Dorsolateral prefrontal cortex (tissue), 120 donors: ENCODE measurements at regions of chr3 and their contacts with region 1.

Region 1: GRCh38 chr3:88025001-88025552 is 33.7 kb downstream of the CGGBP1 start:
- DNase-seq: no peak
- H3K4me3 ChIP-seq: no peak overlapping the region
- H3K27ac ChIP-seq: no peak overlapping the region
- H3K27me3 ChIP-seq: no peaks in the 10 kb centered on the region
- CTCF ChIP-seq: no peak

Region 2: DNA sequence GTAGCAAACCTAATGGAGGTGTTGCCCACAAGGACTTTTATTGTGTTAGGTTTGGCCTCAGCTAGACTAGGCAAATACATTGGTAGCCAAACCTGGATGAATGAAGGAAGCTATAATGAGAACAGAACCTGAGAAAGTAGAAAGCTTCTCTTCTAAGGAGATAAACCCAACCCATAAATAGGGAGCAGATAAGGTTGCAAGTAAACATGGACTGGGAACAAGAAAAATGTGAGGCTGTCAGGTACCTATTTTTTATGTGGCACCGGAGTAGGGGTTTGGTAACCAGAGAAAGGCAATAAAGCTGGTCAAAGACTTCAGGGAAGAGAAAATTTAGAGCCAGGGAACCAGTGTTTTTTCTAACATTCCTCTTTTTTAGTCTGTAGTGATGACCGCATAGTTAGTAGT is 59.0 kb after region 1 on chr3:
- intact Hi-C with region 1: no loop called
- DNase-seq: no peak
- H3K4me3 ChIP-seq: no peak overlapping the region
- H3K27ac ChIP-seq: no peak overlapping the region
- H3K27me3 ChIP-seq: no peaks in the 10 kb centered on the region
- CTCF ChIP-seq: no peak

Region 3: DNA sequence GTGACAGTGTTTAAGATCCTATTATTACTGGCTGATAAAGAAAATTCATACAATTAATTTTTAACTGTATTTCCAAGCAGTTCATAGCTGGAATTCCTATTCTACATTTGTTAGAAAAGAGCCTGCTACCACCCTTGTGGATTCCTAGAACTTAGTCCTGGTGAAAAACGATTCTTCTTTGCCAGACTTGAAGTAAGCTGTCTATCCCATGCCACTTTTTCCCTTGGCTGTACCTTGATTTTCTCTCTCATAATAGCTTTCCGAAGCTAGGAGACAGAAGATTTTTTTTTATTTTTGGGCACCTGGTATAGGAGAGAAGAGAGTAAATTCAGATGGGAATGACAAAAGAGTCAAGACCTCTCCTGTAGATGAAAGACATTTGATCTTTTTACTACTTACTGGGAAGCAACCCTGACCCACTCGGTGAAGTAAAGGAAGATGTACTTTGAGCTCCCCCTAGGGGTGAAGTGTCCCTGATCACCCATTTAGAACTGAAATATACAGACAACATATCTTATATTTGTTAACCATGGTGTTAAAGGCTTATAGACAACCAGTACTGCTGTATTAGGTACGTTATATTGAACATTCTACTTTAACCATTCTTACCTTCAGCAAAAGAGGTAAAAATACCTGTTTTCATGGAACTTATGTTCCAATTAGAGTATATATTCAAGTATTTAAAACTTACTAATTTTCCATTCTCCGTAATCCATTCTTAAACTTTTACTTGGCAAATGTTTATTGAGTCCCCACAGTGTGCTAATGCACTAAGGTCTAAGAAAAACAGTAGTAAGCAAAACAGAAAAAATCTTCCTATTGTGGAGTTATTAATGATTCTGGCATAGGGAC is 88.5 kb after region 1 on chr3:
- intact Hi-C with region 1: loop called in 1 of 2 experiments (anchors 10 kb)
- DNase-seq: peak in 4 of 10 donors; percentile 15 to 60 (median 55)
- H3K4me3 ChIP-seq: no peak overlapping the region
- H3K27ac ChIP-seq: no peak overlapping the region
- H3K27me3 ChIP-seq: no peaks in the 10 kb centered on the region
- CTCF ChIP-seq: peak; percentile 59 to 87 (median 78)

Region 4: DNA sequence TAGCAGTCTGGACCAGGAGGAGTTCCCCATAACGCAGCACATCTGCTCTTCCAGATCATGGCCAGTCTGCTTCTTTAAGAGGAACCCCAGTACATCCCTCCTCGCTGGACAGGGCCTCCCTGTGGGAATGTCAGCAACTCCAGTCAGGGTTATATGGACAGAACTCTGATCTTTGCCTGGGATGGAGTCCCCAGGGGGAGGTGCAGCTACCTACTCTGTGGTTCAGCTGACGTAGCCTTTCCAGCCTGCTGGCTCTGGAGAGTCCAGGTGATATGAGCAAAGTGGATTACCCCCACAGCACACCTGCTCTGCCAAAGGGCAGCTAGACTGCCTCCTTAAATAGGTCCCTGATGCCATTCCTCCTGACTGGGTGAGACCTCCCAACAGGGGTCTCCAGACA is 665.2 kb after region 1 on chr3:
- intact Hi-C with region 1: no loop called
- DNase-seq: no peak
- H3K4me3 ChIP-seq: no peak overlapping the region
- H3K27ac ChIP-seq: no peak overlapping the region
- H3K27me3 ChIP-seq: no peaks in the 10 kb centered on the region
- CTCF ChIP-seq: no peak